CD8-positive, alpha-beta T cell (primary cell): ENCODE measurements at regions of chr19 and their contacts with region 1.

Region 1: GRCh38 chr19:53103198-53103944 is at the start of gene ZNF160:
- DNase-seq: peak; percentile 99 to 100 (median 99)
- ATAC-seq: peak; percentile 95
- H3K4me3 ChIP-seq: peak within 1 kb of the TSS; percentile 72 to 83
- H3K4me3 Mint-ChIP-seq: peak within 1 kb of the TSS; percentile 92
- H3K27ac ChIP-seq: peak within 1 kb of the TSS; percentile 89 to 90
- H3K27ac Mint-ChIP-seq: peak within 1 kb of the TSS; percentile 97
- H3K4me1 ChIP-seq: peaks cover 14% of the 10 kb centered on the region
- H3K4me1 Mint-ChIP-seq: peaks cover 37% of the 10 kb centered on the region
- H3K27me3 ChIP-seq: no peaks in the 10 kb centered on the region
- H3K27me3 Mint-ChIP-seq: no peaks in the 10 kb centered on the region
- CTCF ChIP-seq: no peak
- total RNA-seq, gene ZNF160: 50.8 to 53.3 TPM

Region 2: GRCh38 chr19:52269338-52270261 is 833.8 kb before region 1 on chr19 and contains the start of gene ZNF766:
- CTCF ChIA-PET with region 1: no interaction called
- POLR2A ChIA-PET with region 1: no interaction called
- intact Hi-C with region 1: loop called in 1 of 2 experiments (anchors 1 kb)
- DNase-seq: peak; percentile 95 to 98 (median 97)
- ATAC-seq: peak; percentile 98
- H3K4me3 ChIP-seq: peak within 1 kb of the TSS; percentile 89 to 95
- H3K4me3 Mint-ChIP-seq: peak within 1 kb of the TSS; percentile 98
- H3K27ac ChIP-seq: peak within 1 kb of the TSS; percentile 96
- H3K27ac Mint-ChIP-seq: peak within 1 kb of the TSS; percentile 98
- H3K4me1 ChIP-seq: peaks cover 13% of the 10 kb centered on the region
- H3K4me1 Mint-ChIP-seq: peaks cover 41% of the 10 kb centered on the region
- H3K27me3 ChIP-seq: no peaks in the 10 kb centered on the region
- H3K27me3 Mint-ChIP-seq: no peaks in the 10 kb centered on the region
- CTCF ChIP-seq: no peak
- total RNA-seq, gene ZNF766: 50.8 to 52.6 TPM

Region 3: GRCh38 chr19:52853880-52854279 is 249.5 kb before region 1 on chr19:
- CTCF ChIA-PET with region 1: no interaction called
- POLR2A ChIA-PET with region 1: no interaction called
- intact Hi-C with region 1: loop called in 1 of 2 experiments (anchors 2 kb)
- DNase-seq: no peak
- ATAC-seq: no peak
- H3K4me3 ChIP-seq: no peak overlapping the region
- H3K4me3 Mint-ChIP-seq: no peak overlapping the region
- H3K27ac ChIP-seq: no peak overlapping the region
- H3K27ac Mint-ChIP-seq: no peak overlapping the region
- H3K4me1 ChIP-seq: peaks cover 5% of the 10 kb centered on the region
- H3K4me1 Mint-ChIP-seq: peaks cover 29% of the 10 kb centered on the region
- H3K27me3 ChIP-seq: no peaks in the 10 kb centered on the region
- H3K27me3 Mint-ChIP-seq: no peaks in the 10 kb centered on the region
- CTCF ChIP-seq: no peak

Region 4: GRCh38 chr19:52993323-52994178 is 109.8 kb before region 1 on chr19:
- CTCF ChIA-PET with region 1: no interaction called
- POLR2A ChIA-PET with region 1: no interaction called
- intact Hi-C with region 1: loop called (anchors 1 to 2 kb)
- DNase-seq: peak; percentile 64 to 84 (median 77)
- ATAC-seq: peak; percentile 96
- H3K4me3 ChIP-seq: peak overlapping the region; percentile 38 to 65
- H3K4me3 Mint-ChIP-seq: peak overlapping the region; percentile 90
- H3K27ac ChIP-seq: no peak overlapping the region
- H3K27ac Mint-ChIP-seq: peak overlapping the region; percentile 60
- H3K4me1 ChIP-seq: peaks cover 6% of the 10 kb centered on the region
- H3K4me1 Mint-ChIP-seq: peaks cover 23% of the 10 kb centered on the region
- H3K27me3 ChIP-seq: no peaks in the 10 kb centered on the region
- H3K27me3 Mint-ChIP-seq: peaks cover 4% of the 10 kb centered on the region
- CTCF ChIP-seq: peak; percentile 81

Region 5: GRCh38 chr19:53254411-53255341 is 151.3 kb after region 1 on chr19 and contains the start of gene ZNF677:
- CTCF ChIA-PET with region 1: no interaction called
- POLR2A ChIA-PET with region 1: no interaction called
- intact Hi-C with region 1: loop called (anchors 1 kb)
- DNase-seq: peak; percentile 60 to 90 (median 82)
- ATAC-seq: peak; percentile 99
- H3K4me3 ChIP-seq: peak within 1 kb of the TSS; percentile 75 to 98
- H3K4me3 Mint-ChIP-seq: peak within 1 kb of the TSS; percentile 84
- H3K27ac ChIP-seq: peak within 1 kb of the TSS in 1 of 2 experiments; percentile 75
- H3K27ac Mint-ChIP-seq: peak within 1 kb of the TSS; percentile 81
- H3K4me1 ChIP-seq: peaks cover 11% of the 10 kb centered on the region
- H3K4me1 Mint-ChIP-seq: peaks cover 9% of the 10 kb centered on the region
- H3K27me3 ChIP-seq: no peaks in the 10 kb centered on the region
- H3K27me3 Mint-ChIP-seq: no peaks in the 10 kb centered on the region
- CTCF ChIP-seq: no peak
- total RNA-seq, gene ZNF677: 7.8 to 8.3 TPM

Region 6: GRCh38 chr19:53431399-53432087 is 328.2 kb after region 1 on chr19 and contains the start of gene ZNF761:
- CTCF ChIA-PET with region 1: no interaction called
- POLR2A ChIA-PET with region 1: no interaction called
- intact Hi-C with region 1: loop called in 1 of 2 experiments (anchors 1 kb)
- DNase-seq: peak; percentile 95 to 100 (median 97)
- ATAC-seq: peak; percentile 99
- H3K4me3 ChIP-seq: peak within 1 kb of the TSS; percentile 71 to 85
- H3K4me3 Mint-ChIP-seq: peak within 1 kb of the TSS; percentile 98
- H3K27ac ChIP-seq: peak within 1 kb of the TSS; percentile 79 to 84
- H3K27ac Mint-ChIP-seq: peak within 1 kb of the TSS; percentile 97
- H3K4me1 ChIP-seq: peaks cover 11% of the 10 kb centered on the region
- H3K4me1 Mint-ChIP-seq: peaks cover 41% of the 10 kb centered on the region
- H3K27me3 ChIP-seq: no peaks in the 10 kb centered on the region
- H3K27me3 Mint-ChIP-seq: no peaks in the 10 kb centered on the region
- CTCF ChIP-seq: peak; percentile 47
- total RNA-seq, gene ZNF761: 8.4 to 9.2 TPM

Region 7: GRCh38 chr19:54133312-54133956 is 1030.1 kb after region 1 on chr19:
- CTCF ChIA-PET with region 1: no interaction called
- POLR2A ChIA-PET with region 1: no interaction called
- intact Hi-C with region 1: no loop called
- DNase-seq: peak in 2 of 9 experiments; percentile 75 to 83
- ATAC-seq: no peak
- H3K4me3 ChIP-seq: no peak overlapping the region
- H3K4me3 Mint-ChIP-seq: no peak overlapping the region
- H3K27ac ChIP-seq: peak overlapping the region in 1 of 2 experiments; percentile 50
- H3K27ac Mint-ChIP-seq: no peak overlapping the region
- H3K4me1 ChIP-seq: peaks cover 10% of the 10 kb centered on the region
- H3K4me1 Mint-ChIP-seq: peaks cover 18% of the 10 kb centered on the region
- H3K27me3 ChIP-seq: peaks cover 0 to 3% of the 10 kb centered on the region in 2 experiments
- H3K27me3 Mint-ChIP-seq: no peaks in the 10 kb centered on the region
- CTCF ChIP-seq: no peak